Mammary epithelial cell (primary cell): ENCODE measurements at regions of chr3 and their contacts with region 1.

Region 1: DNA sequence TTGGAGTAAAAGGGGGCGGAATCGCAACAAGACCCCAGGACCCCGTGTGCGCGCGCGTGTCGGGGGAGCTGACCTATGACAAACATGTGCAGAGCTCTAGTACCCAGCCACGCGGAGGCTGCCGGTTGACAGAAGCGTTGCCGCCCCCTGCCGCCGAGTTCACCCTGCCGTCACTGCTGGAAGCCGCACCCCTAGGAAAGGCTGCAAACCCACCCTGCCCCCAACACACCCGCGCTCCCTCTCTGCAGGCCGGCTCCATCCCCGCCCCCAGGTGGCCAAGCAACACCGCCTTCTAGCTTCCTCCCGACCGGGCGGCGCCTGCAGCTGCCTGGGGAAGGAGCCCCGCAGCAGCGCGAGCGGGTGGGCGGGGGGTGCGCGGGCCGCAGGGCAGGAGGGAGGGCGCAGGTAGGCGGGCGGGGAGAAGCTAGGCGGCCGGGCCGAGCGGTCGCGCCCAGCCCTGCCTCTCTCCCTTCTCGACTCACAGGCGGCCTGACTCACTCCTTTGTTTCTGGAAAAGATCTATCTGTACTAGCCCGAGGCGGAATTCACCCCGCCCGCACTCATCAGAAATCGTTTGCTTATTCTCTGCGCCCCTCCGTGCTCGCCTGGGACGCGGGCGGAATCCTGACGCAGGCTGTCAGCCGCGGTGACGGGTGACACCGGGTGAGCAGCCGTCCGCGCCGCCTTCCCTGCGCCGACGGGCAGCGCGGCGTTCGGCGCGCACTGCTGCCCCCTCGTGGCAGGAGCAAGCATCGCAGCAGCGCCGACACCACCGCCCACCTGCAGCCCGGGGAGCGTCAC is 160.8 kb downstream of the GAP43 start:
- DNase-seq: peak; percentile 95
- H3K4me3 ChIP-seq: peak overlapping the region; percentile 41 to 79 (median 48)
- H3K27ac ChIP-seq: peak overlapping the region; percentile 95
- H3K4me1 ChIP-seq: peaks cover 29% of the 10 kb centered on the region
- H3K27me3 ChIP-seq: no peaks in the 10 kb centered on the region
- CTCF ChIP-seq: peak; percentile 94

Region 2: GRCh38 chr3:115147329-115148141 is 636.6 kb before region 1 on chr3:
- CTCF ChIA-PET with region 1: no interaction called
- dilution Hi-C with region 1: no loop called
- in situ Hi-C with region 1: no loop called
- intact Hi-C with region 1: loop called (anchors 2 kb)
- DNase-seq: peak; percentile 100
- H3K4me3 ChIP-seq: peak overlapping the region; percentile 67 to 87 (median 74)
- H3K27ac ChIP-seq: peak overlapping the region; percentile 74
- H3K4me1 ChIP-seq: peaks cover 13% of the 10 kb centered on the region
- H3K27me3 ChIP-seq: no peaks in the 10 kb centered on the region
- CTCF ChIP-seq: no peak

Region 3: DNA sequence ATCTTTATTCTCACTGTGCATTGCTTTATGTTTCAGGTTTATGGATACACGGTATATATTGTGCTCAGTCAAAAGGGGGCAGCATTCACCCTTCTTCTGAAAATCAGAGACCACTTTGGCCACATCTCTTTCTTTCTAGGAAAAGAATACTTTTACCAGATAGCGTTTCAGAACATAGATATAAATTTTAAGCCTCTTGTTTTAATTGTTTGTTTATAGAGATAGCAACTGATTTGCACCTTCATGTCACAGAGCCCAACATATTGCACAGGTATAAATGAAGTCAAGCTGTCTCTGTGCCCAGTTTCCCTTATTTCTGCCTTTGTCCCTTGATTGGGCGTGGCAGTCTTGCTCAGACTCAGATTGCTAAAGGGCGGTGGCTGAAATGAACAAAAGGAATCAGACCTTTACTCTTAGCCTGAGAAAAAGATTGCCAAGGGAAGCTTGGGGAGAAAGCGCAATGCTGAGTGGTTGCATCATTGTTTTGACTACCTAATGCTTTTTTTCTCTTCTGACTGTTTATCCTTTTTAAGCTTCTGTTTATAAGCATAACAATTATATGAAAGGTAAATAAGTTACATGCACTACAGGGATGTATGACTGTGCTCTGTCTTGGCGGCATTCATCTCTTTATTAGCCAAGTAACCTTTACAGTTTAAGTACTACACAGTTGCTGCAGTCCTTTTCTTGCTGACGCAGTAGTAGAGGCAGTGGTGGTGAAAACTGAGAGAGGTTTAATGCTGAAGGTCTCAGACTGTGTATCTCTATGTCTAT is 566.3 kb before region 1 on chr3:
- CTCF ChIA-PET with region 1: interaction called, 3 read pairs
- dilution Hi-C with region 1: no loop called
- in situ Hi-C with region 1: no loop called
- intact Hi-C with region 1: loop called (anchors 1 kb)
- DNase-seq: peak; percentile 56
- H3K4me3 ChIP-seq: no peak overlapping the region
- H3K27ac ChIP-seq: no peak overlapping the region
- H3K4me1 ChIP-seq: no peaks in the 10 kb centered on the region
- H3K27me3 ChIP-seq: no peaks in the 10 kb centered on the region
- CTCF ChIP-seq: peak; percentile 72

Region 4: DNA sequence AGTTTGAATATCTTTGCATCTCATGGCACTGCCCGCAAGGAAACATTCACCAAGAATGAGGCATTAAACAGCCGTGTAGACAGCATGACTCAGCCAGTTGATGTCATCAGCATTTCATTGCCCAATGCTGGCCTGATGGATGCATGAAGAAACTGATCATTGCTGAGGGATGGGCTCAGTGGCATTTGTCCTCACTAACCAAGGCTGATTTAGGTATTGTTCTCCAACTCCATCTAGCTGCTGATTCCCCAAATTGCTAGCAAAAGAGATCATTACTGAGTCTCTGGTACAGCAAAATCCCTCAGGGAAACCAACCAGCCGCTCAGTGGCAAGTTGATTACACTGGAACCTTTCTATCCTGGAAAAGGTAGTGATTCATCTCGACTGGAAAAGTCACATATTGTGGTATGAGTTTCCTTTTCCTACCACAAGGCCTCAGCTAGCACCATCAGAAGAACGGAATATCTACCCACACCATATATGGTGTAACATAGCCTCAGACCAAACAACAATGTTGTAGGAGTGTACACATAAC is 347.3 kb before region 1 on chr3:
- CTCF ChIA-PET with region 1: no interaction called
- dilution Hi-C with region 1: no loop called
- in situ Hi-C with region 1: no loop called
- intact Hi-C with region 1: loop called (anchors 1 kb)
- DNase-seq: peak; percentile 97
- H3K4me3 ChIP-seq: no peak overlapping the region
- H3K27ac ChIP-seq: peak overlapping the region; percentile 55
- H3K4me1 ChIP-seq: peaks cover 18% of the 10 kb centered on the region
- H3K27me3 ChIP-seq: no peaks in the 10 kb centered on the region
- CTCF ChIP-seq: peak; percentile 50 to 67

Region 5: GRCh38 chr3:115648559-115648958 is 135.6 kb before region 1 on chr3:
- CTCF ChIA-PET with region 1: no interaction called
- dilution Hi-C with region 1: no loop called
- in situ Hi-C with region 1: no loop called
- intact Hi-C with region 1: no loop called
- DNase-seq: peak; percentile 34
- H3K4me3 ChIP-seq: no peak overlapping the region
- H3K27ac ChIP-seq: no peak overlapping the region
- H3K4me1 ChIP-seq: no peaks in the 10 kb centered on the region
- H3K27me3 ChIP-seq: no peaks in the 10 kb centered on the region
- CTCF ChIP-seq: no peak

Region 6: DNA sequence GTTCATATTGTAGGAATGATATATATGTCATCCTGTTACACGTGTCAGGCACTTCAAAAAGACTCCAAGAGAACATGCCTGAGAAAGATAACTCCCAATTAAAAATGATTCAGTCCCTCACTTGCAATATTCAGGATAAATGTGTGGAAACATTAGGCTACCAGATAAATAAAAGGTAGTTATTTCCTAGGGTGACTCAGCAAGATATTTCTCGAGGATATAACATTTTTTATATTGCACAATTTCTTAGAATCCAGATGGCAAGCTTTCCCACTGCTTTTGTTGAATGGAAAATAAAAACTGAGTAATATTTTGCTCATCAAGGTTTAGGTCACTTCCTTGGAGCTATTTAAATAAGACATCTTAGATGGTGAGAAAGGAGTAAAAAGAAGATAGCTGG is 20.6 kb after region 1 on chr3:
- CTCF ChIA-PET with region 1: interaction called, 20 read pairs
- dilution Hi-C with region 1: no loop called
- in situ Hi-C with region 1: no loop called
- intact Hi-C with region 1: loop called (anchors 1 kb)
- DNase-seq: peak; percentile 94
- H3K4me3 ChIP-seq: no peak overlapping the region
- H3K27ac ChIP-seq: peak overlapping the region; percentile 94
- H3K4me1 ChIP-seq: peaks cover 27% of the 10 kb centered on the region
- H3K27me3 ChIP-seq: no peaks in the 10 kb centered on the region
- CTCF ChIP-seq: no peak